Activated CD8-positive, alpha-beta T cell treated with anti-CD3 and anti-CD28 coated beads for 36 hours (primary cell): ENCODE measurements at regions of chr4 and their contacts with region 1.

Region 1: GRCh38 chr4:7067452-7068278 is at the start of gene GRPEL1:
- DNase-seq: peak; percentile 100
- ATAC-seq: peak; percentile 95
- H3K4me3 Mint-ChIP-seq: peak within 1 kb of the TSS; percentile 91
- H3K27ac Mint-ChIP-seq: peak within 1 kb of the TSS; percentile 92
- H3K4me1 Mint-ChIP-seq: peaks cover 42% of the 10 kb centered on the region
- H3K27me3 Mint-ChIP-seq: peaks cover 1% of the 10 kb centered on the region
- CTCF ChIP-seq: no peak
- total RNA-seq, gene GRPEL1: 82.4 to 84.5 TPM

Region 2: GRCh38 chr4:6794189-6794588 is 273.5 kb before region 1 on chr4:
- CTCF ChIA-PET with region 1: no interaction called
- POLR2A ChIA-PET with region 1: no interaction called
- intact Hi-C with region 1: no loop called
- DNase-seq: no peak
- ATAC-seq: peak; percentile 24
- H3K4me3 Mint-ChIP-seq: no peak overlapping the region
- H3K27ac Mint-ChIP-seq: peak overlapping the region; percentile 26
- H3K4me1 Mint-ChIP-seq: peaks cover 59% of the 10 kb centered on the region
- H3K27me3 Mint-ChIP-seq: no peaks in the 10 kb centered on the region
- CTCF ChIP-seq: no peak

Region 3: GRCh38 chr4:6901669-6902317 is 165.9 kb before region 1 on chr4:
- CTCF ChIA-PET with region 1: interaction called, 10 read pairs
- POLR2A ChIA-PET with region 1: interaction called, 5 read pairs
- intact Hi-C with region 1: no loop called
- DNase-seq: no peak
- ATAC-seq: no peak
- H3K4me3 Mint-ChIP-seq: no peak overlapping the region
- H3K27ac Mint-ChIP-seq: peak overlapping the region; percentile 71
- H3K4me1 Mint-ChIP-seq: peaks cover 24% of the 10 kb centered on the region
- H3K27me3 Mint-ChIP-seq: no peaks in the 10 kb centered on the region
- CTCF ChIP-seq: no peak

Region 4: GRCh38 chr4:6917461-6918271 is 150.0 kb before region 1 on chr4:
- CTCF ChIA-PET with region 1: interaction called, 4 read pairs
- POLR2A ChIA-PET with region 1: no interaction called
- intact Hi-C with region 1: loop called (anchors 5 kb)
- DNase-seq: peak; percentile 76
- ATAC-seq: peak; percentile 60
- H3K4me3 Mint-ChIP-seq: peak overlapping the region; percentile 41
- H3K27ac Mint-ChIP-seq: peak overlapping the region; percentile 88
- H3K4me1 Mint-ChIP-seq: peaks cover 68% of the 10 kb centered on the region
- H3K27me3 Mint-ChIP-seq: no peaks in the 10 kb centered on the region
- CTCF ChIP-seq: peak; percentile 67

Region 5: DNA sequence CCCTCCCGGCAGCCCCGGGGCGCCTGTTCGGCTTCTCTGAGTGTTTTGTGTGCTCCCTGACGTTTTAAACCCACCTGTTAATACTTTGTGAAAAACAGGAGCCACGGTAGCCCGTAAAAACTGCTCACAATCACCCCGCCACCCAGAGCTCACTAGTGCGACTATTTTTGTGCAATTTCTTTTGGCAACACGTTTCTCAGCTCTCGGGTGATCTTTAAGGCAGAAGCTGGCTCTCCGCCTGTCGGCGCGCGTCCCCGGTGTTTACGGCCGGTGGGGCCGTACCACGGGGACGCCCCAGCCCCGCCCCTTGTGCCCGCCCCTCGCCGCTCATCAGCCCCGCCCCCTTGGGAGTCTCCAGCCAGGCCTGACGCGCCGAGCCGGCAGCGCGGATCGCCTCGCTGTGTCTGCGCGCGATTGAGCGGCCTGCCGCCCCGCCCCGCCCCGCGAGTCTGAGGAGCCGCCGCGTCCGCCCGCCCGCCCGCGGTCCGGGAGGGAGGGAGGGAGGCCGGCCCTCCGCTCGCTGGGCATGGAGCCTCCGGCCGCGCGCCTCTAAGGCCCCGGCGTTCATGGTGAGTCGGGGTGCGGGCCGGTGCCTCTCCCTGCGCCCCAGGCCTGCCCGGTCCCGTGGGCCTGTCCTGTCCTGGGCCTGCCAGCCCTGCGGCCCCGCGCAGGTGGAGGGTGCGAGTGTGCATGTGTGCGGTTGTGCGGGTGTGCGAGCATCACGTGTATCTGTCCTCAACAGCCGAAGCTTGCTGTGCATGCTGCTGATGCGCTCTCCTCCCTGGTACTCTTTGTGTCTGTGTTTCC is 80.7 kb before region 1 on chr4:
- CTCF ChIA-PET with region 1: interaction called, 13 read pairs
- POLR2A ChIA-PET with region 1: interaction called, 6 read pairs
- intact Hi-C with region 1: no loop called
- DNase-seq: peak; percentile 94
- ATAC-seq: peak; percentile 97
- H3K4me3 Mint-ChIP-seq: peak overlapping the region; percentile 86
- H3K27ac Mint-ChIP-seq: peak overlapping the region; percentile 92
- H3K4me1 Mint-ChIP-seq: peaks cover 66% of the 10 kb centered on the region
- H3K27me3 Mint-ChIP-seq: no peaks in the 10 kb centered on the region
- CTCF ChIP-seq: no peak

Region 6: DNA sequence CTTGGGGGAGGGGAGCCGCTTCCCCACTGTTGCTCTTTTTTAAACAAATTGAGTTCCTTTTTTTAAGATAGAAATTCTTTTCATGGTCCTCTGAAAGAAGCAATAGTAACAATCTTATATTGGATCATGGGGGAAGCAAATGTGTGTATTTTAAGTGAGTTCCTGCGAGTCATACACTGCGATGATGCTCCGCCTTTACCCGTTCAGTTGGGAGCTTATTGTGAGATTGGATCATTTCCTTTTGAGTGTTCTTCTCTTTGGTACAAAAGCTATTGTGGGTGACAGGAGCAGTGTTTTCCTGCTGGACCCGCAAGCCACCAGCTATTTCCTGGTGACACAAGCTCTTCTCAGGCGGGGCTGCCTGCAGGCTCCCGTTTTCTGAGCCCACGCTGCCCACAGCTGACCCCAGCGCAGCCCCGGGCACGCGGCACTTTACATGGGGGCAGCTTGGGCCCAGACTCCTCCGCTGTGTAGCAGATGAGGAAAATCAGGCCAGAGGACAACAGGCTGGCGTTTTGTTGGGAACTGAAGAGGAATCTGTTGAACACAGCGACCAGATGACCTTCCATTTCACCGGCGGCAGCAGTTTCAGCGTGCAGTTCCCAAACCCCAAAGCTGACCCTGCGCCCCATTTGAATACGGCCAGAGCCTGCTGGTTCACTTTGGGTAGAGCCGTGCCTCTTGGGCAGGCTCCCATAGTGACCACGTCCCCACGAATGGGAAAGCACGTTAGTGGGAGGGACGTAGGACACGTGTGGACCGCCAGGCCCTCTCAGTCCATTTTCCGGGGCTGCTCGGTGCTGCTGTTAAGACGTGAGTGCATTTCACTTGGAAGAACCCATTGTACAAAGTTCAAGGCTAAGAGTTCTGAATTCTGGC is 12.3 kb before region 1 on chr4:
- CTCF ChIA-PET with region 1: interaction called, 14 read pairs
- POLR2A ChIA-PET with region 1: interaction called, 123 read pairs
- intact Hi-C with region 1: no loop called
- DNase-seq: no peak
- ATAC-seq: no peak
- H3K4me3 Mint-ChIP-seq: no peak overlapping the region
- H3K27ac Mint-ChIP-seq: no peak overlapping the region
- H3K4me1 Mint-ChIP-seq: peaks cover 26% of the 10 kb centered on the region
- H3K27me3 Mint-ChIP-seq: no peaks in the 10 kb centered on the region
- CTCF ChIP-seq: no peak

Region 7: DNA sequence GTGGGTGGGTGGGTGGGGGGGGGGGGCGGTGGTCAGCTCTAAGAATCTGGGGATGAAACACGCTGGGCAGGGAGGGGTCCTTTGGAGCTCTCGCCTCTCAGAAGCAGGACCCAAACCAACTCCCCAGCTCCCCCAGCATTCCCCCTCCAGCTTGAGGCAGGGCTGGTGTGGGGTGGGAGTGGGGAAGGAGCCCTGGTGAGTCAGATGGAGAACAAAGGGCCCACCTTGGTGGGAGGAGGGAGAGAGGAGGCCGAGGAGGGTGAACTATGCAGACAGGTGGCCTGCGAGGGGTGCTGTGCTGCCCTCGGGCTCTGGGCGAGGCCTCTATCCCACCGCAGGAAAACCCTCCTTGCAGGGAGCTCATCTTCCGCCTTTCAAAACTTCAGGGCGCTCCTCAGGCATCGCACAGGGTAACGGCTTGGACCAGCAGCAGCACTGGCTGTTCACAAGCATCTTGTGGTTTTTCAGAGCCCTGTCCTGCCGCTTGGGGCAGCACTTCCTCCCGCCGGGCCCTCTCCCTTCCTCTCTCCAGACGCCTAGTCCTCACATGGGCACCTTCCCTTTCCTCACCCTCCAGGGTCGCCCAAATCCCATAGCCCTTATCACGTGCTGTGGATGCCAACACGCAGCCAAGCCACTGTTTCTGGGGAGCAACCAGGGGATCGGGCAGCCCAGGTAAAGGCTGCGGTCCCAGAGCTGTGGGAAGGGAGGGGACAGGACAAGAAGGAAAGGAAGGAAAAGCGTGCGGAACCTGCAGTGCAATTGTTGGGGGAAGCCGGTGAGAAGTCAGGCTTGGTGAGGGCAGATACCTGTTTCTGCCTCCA is 34.2 kb after region 1 on chr4:
- CTCF ChIA-PET with region 1: interaction called, 32 read pairs
- POLR2A ChIA-PET with region 1: interaction called, 4 read pairs
- intact Hi-C with region 1: no loop called
- DNase-seq: peak; percentile 73
- ATAC-seq: peak; percentile 64
- H3K4me3 Mint-ChIP-seq: peak overlapping the region; percentile 86
- H3K27ac Mint-ChIP-seq: no peak overlapping the region
- H3K4me1 Mint-ChIP-seq: peaks cover 10% of the 10 kb centered on the region
- H3K27me3 Mint-ChIP-seq: no peaks in the 10 kb centered on the region
- CTCF ChIP-seq: peak; percentile 66

Region 8: DNA sequence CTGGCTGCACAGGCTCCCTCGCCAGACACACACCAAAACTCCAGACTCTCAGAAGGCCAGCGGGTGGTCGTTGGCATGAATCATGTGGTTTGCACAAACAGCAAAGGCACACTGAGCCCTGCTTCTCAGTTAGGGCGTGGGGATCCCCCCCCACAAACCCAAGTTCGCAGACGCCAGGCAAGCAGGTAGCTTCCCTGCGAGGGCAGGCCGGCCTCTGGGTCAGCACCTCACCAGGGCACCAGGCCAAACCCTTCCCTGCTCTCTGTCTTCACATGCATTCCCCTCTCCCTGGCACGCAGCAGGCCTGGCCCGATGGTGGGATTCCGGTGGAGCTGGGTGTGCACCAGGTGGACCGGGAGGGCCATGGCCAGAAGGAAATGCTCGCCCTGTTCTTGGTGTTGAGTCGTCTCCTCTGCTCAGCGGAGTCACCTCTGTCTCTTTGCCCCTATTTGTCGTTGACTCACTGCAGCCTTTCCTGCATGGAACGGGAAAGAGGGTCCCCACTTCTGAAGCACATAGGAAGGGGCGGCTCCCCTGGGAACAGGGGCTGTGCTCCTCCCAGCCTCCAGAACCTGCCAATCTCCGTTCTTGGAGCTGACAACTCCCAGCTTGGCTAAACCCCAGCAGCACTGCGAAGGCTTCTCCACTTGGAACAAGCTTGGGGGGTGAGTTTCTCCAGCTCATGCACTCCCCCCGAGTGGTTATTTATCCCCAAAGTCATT is 176.1 kb after region 1 on chr4:
- CTCF ChIA-PET with region 1: no interaction called
- POLR2A ChIA-PET with region 1: no interaction called
- intact Hi-C with region 1: no loop called
- DNase-seq: no peak
- ATAC-seq: no peak
- H3K4me3 Mint-ChIP-seq: no peak overlapping the region
- H3K27ac Mint-ChIP-seq: no peak overlapping the region
- H3K4me1 Mint-ChIP-seq: no peaks in the 10 kb centered on the region
- H3K27me3 Mint-ChIP-seq: no peaks in the 10 kb centered on the region
- CTCF ChIP-seq: no peak

Region 9: DNA sequence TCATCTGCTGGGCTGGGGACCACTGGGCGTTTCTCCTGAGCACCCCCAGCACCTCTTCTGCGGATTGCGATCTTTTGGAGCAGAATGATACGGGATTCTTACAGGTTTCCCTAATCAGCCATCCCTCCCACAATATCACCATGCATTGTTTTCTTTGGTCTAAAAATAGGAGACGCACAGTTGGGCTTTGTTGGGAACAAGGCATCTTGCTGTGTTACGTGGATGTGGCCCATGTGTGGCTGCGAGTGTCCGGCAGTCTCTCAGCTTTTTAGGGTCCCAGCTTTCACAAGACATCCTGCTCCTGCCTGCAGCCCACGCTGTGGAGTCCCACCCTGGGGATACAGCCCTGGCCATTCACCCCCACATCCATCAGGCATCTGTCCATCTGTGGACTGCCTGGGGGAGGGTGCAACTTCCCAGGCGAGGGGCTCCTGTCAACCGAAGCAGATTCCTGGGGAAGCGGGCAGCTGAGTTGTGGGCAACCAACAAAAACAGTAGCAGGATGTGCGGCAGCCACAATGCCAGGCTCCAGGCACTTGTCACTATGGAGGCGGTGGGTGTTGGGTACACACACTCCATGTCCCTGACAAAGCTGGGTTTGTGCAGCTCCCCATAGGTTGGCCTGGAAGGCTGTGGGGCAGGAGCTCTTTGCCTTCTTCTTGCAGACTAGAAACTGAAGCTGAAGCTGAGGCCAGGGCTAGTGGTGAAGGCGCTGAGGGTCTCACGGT is 552.6 kb after region 1 on chr4:
- CTCF ChIA-PET with region 1: no interaction called
- POLR2A ChIA-PET with region 1: no interaction called
- intact Hi-C with region 1: no loop called
- DNase-seq: no peak
- ATAC-seq: no peak
- H3K4me3 Mint-ChIP-seq: no peak overlapping the region
- H3K27ac Mint-ChIP-seq: no peak overlapping the region
- H3K4me1 Mint-ChIP-seq: no peaks in the 10 kb centered on the region
- H3K27me3 Mint-ChIP-seq: peaks cover 8% of the 10 kb centered on the region
- CTCF ChIP-seq: no peak